Activated T-helper 2 cell treated with anti-CD3 and anti-CD28 coated beads, Interferon-gamma antibody, Interleukin-2, Interleukin-4, amounts not matched to agents 10 μg/mL and 5 μg/mL and 100 μg/mL, durations not matched to agents 14 hours and 24 hours and 36 hours (primary cell): ENCODE measurements at regions of chr20 and their contacts with region 1.

Region 1: GRCh38 chr20:47576516-47577033 is 74.9 kb downstream of the NCOA3 start:
- DNase-seq: no peak
- H3K4me3 Mint-ChIP-seq: peak overlapping the region; percentile 70
- H3K27ac Mint-ChIP-seq: peak overlapping the region; percentile 82
- H3K4me1 Mint-ChIP-seq: peaks cover 57% of the 10 kb centered on the region
- H3K27me3 Mint-ChIP-seq: no peaks in the 10 kb centered on the region

Region 2: GRCh38 chr20:47610247-47610944 is 33.8 kb after region 1 on chr20:
- intact Hi-C with region 1: loop called (anchors 5 kb)
- DNase-seq: peak; percentile 64
- H3K4me3 Mint-ChIP-seq: peak overlapping the region; percentile 76
- H3K27ac Mint-ChIP-seq: peak overlapping the region; percentile 99
- H3K4me1 Mint-ChIP-seq: peaks cover 77% of the 10 kb centered on the region
- H3K27me3 Mint-ChIP-seq: no peaks in the 10 kb centered on the region

Region 3: GRCh38 chr20:47691625-47692024 is 115.0 kb after region 1 on chr20:
- intact Hi-C with region 1: no loop called
- DNase-seq: no peak
- H3K4me3 Mint-ChIP-seq: no peak overlapping the region
- H3K27ac Mint-ChIP-seq: no peak overlapping the region
- H3K4me1 Mint-ChIP-seq: peaks cover 8% of the 10 kb centered on the region
- H3K27me3 Mint-ChIP-seq: peaks cover 8% of the 10 kb centered on the region